ENCODE measurements at regions of chr12 and their contacts with region 1.

Region 1: DNA sequence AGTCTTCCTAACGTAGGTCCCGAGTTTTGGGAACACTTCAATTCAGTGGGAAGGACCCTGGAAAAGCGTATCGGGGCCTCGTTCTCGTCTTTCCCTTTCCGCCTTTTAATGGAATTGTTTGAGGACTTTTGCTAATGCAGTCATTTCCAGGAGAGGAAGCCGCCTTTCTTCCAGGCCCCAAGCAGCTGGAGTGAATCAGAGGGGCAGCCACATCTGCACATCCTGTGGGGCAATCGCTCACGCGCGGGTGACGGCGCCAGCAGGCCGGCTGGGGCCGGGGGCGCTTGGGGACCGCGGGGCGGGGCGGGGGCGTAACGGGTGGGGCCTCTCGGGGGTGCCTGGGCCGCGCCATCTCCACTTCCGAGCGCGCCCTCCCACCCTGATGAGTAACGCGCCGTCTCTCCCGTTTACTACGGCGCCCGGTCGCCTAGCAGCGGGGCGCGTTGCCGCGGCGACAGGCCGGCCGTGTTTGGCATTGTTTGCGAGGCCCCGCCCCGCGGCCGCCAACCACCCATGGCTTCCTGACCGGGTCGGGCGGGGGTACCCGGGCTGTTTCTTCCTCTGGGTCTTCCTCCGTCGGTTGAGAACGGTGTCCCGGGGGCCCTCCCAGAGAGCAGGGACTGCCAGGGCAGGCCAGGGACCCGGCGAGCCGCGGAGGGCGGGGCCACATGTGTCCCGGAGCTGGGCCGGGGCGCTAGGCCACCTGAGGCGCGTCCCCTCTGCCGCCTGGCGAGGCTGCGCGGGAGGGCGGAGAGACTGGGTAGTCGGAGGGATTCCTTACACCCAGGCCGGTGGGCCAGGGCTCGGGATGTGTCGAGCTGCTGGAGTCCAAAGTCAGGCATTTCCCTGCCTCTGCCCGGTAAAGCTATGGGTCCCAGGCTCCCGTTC is 2.3 kb downstream of the GSG1 start:
- DNase-seq: peak; percentile 91
- H3K4me3 Mint-ChIP-seq: peak overlapping the region; percentile 63
- H3K27ac Mint-ChIP-seq: peak overlapping the region; percentile 70
- H3K4me1 Mint-ChIP-seq: peaks cover 49% of the 10 kb centered on the region
- H3K27me3 Mint-ChIP-seq: no peaks in the 10 kb centered on the region

Region 2: DNA sequence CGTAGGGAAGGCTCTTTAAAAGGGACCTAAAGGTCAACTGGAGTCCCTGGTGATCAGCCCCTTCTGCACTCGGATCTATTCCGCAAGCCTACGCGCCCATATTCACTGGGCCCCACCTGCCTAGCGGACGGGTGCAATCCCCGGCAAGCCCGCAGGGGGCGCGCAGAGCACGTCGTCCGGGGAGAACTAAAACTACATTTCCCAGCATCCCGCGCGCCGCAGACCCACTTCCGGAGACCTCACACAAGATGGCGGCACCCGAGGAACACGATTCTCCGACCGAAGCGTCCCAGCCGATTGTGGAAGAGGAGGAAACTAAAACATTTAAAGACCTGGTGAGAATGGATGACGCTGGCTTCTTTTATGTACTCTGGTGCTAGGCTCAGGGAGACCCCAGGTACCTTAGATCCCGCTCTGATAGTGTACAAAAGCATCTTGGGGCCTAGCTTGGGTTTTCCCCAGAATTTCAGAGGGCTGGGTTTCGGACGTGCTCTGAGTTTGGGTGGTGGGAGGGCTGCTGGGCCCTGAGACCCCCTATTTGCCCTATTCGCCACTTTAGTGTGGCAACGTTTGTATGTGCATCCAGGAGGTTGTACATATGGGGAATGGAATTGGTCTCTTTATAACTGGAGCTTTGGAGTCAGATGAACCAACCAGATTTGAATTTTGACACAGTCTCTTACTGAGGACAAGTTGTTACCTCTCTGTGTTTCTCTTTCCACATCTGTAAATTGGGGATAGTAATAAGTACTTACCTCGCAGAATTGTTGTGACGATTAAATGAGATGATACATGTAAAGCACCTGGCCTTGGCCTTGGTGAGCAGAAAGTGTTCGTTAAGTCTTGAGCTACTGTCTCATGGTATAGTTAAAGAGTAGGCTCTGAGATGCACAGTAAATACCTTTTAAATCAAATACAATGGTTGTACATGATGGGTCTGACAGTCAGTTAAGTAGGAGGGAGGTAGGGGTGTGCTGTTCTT is 287.7 kb before region 1 on chr12 and contains the start of gene DDX47:
- CTCF ChIA-PET with region 1: interaction called, 3 read pairs
- intact Hi-C with region 1: loop called (anchors 1 kb)
- DNase-seq: peak; percentile 99
- H3K4me3 Mint-ChIP-seq: peak within 1 kb of the TSS; percentile 99
- H3K27ac Mint-ChIP-seq: peak within 1 kb of the TSS; percentile 93
- H3K4me1 Mint-ChIP-seq: peaks cover 57% of the 10 kb centered on the region
- H3K27me3 Mint-ChIP-seq: no peaks in the 10 kb centered on the region
- total RNA-seq, gene DDX47: 86.6 to 87.3 TPM

Region 3: DNA sequence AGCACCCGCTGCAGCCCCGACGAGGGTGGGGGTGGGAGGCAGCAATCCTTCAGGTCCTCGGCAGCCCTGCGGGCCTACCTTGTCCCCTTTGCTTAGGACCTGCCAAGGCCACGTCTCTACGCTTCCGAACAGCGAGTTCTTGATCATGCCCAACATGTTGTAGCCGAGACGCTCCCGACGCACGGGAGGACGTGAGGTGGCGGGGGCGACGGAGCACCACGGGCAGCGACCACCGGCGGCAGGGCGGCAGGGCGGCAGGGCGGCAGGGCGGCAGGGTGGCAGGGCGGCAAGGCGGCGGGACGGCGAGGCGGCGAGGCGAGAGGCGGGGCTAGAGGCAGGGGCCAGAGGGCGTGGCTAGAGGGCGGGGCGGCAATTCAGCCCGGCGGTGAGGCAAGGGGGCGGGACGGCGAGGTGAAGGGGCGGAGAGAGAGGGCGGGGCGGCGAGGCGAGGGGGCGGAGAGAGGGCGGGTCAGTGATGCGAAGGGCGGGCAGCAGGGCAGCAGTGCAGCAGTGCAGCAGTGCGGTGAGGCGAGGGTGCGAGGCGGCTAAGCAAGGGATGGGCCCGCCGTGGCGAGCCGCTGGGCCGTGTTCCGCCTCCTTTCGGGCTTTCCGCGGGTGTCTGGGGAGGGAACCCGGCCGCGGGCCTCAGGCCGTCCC is 101.0 kb before region 1 on chr12 and contains the start of gene HEBP1:
- CTCF ChIA-PET with region 1: no interaction called
- intact Hi-C with region 1: loop called (anchors 1 kb)
- DNase-seq: peak; percentile 97
- H3K4me3 Mint-ChIP-seq: peak within 1 kb of the TSS; percentile 77
- H3K27ac Mint-ChIP-seq: peak within 1 kb of the TSS; percentile 31
- H3K4me1 Mint-ChIP-seq: peaks cover 26% of the 10 kb centered on the region
- H3K27me3 Mint-ChIP-seq: peaks cover 6% of the 10 kb centered on the region
- total RNA-seq, gene HEBP1: 28.7 to 32.3 TPM

Region 4: DNA sequence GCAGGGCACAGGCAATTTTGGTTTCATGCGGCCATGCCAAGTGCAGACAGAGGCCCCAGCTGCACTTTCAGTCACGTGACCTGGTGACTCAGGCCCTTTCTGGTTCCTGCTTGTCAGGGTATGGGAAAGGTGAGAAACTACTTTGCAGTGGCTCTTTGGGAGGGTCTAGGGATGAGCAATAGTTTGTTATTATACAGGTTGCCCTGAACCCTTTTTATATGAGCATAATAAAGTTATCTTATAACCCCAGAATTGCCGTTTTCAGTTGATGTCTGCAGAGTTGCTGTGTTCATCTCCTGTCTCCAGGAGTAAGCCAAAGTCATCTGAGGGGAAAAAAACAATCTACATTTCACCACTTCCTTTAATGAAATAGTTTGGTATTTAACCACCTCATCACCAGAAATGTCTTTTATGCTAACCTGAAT is 64.5 kb after region 1 on chr12:
- CTCF ChIA-PET with region 1: interaction called, 4 read pairs
- intact Hi-C with region 1: loop called (anchors 1 kb)
- DNase-seq: peak; percentile 93
- H3K4me3 Mint-ChIP-seq: no peak overlapping the region
- H3K27ac Mint-ChIP-seq: peak overlapping the region; percentile 31
- H3K4me1 Mint-ChIP-seq: peaks cover 23% of the 10 kb centered on the region
- H3K27me3 Mint-ChIP-seq: no peaks in the 10 kb centered on the region

Region 5: GRCh38 chr12:13211859-13212664 is 110.9 kb after region 1 on chr12:
- CTCF ChIA-PET with region 1: interaction called, 147 read pairs
- intact Hi-C with region 1: loop called (anchors 1 kb)
- DNase-seq: peak; percentile 86
- H3K4me3 Mint-ChIP-seq: no peak overlapping the region
- H3K27ac Mint-ChIP-seq: no peak overlapping the region
- H3K4me1 Mint-ChIP-seq: peaks cover 20% of the 10 kb centered on the region
- H3K27me3 Mint-ChIP-seq: peaks cover 2% of the 10 kb centered on the region

Region 6: DNA sequence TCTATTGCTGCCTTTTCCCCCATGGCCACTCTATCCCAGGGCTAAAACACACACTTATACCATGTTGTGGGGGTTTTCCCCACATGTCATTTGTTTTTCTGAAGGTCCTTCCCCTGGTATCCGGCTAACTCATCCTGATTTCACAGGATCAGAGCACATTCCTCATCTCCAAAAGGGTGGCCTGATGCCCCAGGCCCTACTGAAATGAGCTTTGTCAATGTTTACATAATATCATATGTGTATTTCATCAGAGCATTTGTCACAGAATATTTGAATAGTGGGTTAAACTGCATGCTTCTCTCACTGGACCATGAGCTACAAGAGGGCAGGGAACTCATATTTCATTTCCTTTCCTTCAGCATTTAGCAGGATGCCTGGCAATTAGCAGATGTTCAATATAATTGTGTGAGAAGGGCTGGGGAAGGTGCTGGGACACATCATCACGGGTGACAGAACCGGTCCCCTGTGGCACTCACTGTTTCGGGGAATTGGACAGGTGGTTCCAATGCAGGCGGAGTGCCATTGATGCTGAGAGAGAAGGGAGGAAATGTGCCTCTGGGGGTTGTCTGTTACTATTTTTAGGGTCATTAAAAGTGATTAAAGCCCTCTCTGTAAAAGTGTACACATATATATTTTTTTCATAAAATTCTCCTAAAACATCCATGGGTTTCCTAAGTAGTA is 122.2 kb after region 1 on chr12:
- CTCF ChIA-PET with region 1: no interaction called
- intact Hi-C with region 1: no loop called
- DNase-seq: no peak
- H3K4me3 Mint-ChIP-seq: no peak overlapping the region
- H3K27ac Mint-ChIP-seq: no peak overlapping the region
- H3K4me1 Mint-ChIP-seq: no peaks in the 10 kb centered on the region
- H3K27me3 Mint-ChIP-seq: peaks cover 10% of the 10 kb centered on the region

Measured in activated naive CD4-positive, alpha-beta T cell treated with anti-CD3 and anti-CD28 coated beads for 36 hours (primary cell).